Head of caudate nucleus (tissue), 42 donors: ENCODE measurements at regions of chr13 and their contacts with region 1.

Region 1: GRCh38 chr13:50123862-50124536 is 108.8 kb downstream of the KCNRG start:
- DNase-seq: peak in 27 of 42 donors; percentile 41 to 96 (median 71)

Region 2: DNA sequence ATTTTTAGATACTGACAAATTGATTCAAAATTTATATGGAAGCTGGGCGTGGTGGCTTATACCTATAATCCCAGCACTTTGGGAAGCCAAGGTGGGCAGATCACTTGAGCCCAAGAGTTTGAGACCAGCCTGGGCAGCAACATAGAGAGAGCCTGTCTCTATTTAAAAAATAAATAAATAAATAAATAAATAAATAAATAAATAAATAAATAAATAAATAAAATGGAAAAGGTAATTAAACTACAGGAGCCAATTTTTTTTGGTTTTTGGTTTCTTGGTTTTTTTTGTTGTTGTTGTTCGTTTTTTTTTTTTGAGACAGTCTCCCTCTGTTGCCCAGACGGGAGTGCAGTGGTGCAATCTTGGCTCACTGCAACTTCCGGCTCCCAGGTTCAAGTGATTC is 156.5 kb before region 1 on chr13:
- intact Hi-C with region 1: no loop called
- DNase-seq: no peak

Region 3: GRCh38 chr13:49996951-49997895 is 126.8 kb before region 1 on chr13 and contains the start of gene TRIM13:
- intact Hi-C with region 1: loop called (anchors 1 kb)
- DNase-seq: peak; percentile 82 to 96 (median 91)

Region 4: DNA sequence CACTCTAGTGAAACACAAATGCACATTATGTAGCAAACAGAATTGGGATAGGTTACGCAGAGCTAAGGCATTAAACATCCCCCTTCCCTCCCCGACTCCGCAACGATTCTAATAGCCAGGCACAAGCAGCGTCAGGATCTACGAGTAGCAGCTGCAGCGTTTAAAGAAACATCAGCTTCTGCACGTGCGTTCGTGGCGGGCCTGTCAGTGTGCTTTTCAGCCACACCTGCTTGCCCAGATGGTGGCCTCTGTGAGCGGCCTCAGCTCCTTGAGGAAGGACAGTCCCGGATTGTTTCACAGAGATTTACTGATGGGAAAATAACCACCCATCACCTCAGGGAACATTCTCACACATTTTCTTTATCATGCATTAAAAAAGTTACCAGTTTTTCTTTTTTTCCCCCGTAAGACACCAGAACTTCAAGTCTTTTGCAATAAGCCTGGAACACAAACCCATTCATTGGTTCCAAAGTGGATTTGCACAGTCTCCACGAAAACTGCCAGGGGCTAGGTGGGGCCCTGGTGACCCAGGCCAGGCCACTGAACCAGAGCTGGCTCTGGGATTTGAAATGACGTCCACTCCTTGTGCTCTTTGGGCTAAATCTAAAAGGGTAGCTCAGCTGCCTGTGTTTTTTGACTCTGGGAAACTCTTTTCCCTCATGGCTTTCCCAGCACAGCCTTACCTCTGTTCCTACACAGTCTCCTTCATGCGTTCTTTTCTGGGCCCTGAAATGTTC is 216.7 kb after region 1 on chr13:
- intact Hi-C with region 1: no loop called
- DNase-seq: no peak